HCT116 (cell line): ENCODE measurements at regions of chr4 and their contacts with region 1.

Region 1: DNA sequence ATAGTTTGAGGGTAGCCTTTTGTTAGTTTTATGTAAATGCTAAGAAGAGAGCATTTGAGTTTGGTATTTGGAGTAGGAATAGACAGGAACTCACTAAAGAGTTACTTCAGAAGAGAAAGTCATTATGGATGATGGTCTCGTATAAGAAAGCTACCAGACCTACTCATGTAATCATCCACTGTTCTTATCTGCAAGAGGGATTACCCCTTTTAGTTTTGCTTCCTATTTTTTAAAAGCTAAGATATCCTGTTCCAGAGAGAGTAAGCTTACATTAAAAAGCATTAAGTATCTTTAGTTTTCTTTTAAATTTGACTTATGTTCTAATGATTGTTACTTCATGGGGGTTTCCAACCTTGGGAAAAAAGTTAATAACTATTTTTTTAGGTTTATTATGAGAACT is 12.5 kb upstream of the ART3 start:
- DNase-seq: no peak
- ATAC-seq: no peak
- H3K4me3 ChIP-seq: no peak overlapping the region
- H3K27ac ChIP-seq: no peak overlapping the region
- H3K4me1 ChIP-seq: no peaks in the 10 kb centered on the region
- H3K27me3 ChIP-seq: peaks cover 8% of the 10 kb centered on the region; the same call in 1 of the 2 replicates
- CTCF ChIP-seq: no peak
- POLR2A ChIP-seq: no peak
- RAD21 ChIP-seq: no peak

Region 2: DNA sequence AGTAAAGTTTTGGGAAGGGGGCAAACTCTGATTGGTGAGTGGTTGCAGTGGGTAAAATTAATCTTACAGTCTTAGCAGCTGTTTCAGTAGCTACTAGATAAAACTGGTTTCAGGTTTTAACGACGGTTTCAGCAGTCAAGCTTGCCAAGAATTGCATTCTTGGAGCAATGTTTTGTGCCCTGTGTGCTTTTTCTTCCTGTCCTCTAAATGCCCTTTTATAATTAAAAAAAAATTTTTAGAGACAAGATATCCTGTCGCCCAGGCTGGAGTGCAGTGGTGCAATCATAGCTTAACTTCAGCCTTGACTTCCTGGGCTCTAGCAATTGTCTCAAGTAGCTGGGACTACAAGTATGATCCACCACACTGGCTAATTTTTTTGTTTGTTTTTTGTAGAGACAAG is 153.4 kb before region 1 on chr4:
- CTCF ChIA-PET with region 1: no interaction called
- POLR2A ChIA-PET with region 1: no interaction called
- RAD21 ChIA-PET with region 1: no interaction called
- intact Hi-C with region 1: loop called (anchors 5 kb)
- DNase-seq: no peak
- ATAC-seq: no peak
- H3K4me3 ChIP-seq: no peak overlapping the region
- H3K27ac ChIP-seq: no peak overlapping the region
- H3K4me1 ChIP-seq: no peaks in the 10 kb centered on the region
- H3K27me3 ChIP-seq: no peaks in the 10 kb centered on the region
- CTCF ChIP-seq: no peak
- POLR2A ChIP-seq: no peak
- RAD21 ChIP-seq: no peak